Activated naive CD4-positive, alpha-beta T cell treated with anti-CD3 and anti-CD28 coated beads for 36 hours (primary cell): ENCODE measurements at regions of chr20 and their contacts with region 1.

Region 1: DNA sequence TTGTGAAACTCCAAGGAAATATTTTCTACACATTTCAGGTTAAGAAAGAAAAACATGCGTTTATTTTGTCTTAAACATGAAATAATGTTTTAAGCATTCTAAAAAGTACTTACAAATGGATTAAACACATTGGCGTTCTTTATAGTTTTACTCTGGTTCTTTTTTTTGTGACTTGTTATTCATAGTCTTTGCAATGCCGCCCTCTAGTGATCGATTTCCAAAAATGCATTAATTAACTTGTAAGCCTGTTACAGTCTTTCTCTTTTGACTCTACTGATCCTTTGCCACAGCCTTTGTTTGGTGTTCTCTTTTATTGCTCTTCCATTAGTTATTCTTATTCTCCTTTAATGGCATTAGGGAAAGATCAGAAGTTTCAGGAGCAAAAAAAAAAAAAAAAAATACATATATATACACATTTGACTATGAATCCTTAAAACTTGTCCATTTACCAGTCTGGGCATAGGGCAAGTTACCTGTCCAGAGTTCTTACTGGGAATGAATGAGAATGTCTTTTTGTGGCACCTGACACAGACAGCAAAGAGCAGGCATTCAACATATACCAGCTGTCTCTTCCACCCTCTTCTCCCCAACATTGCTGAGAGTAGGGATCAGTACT is 59.9 kb downstream of the MACROD2 start:
- DNase-seq: peak; percentile 23
- H3K4me3 Mint-ChIP-seq: no peak overlapping the region
- H3K27ac Mint-ChIP-seq: no peak overlapping the region
- H3K4me1 Mint-ChIP-seq: no peaks in the 10 kb centered on the region
- H3K27me3 Mint-ChIP-seq: peaks cover 2% of the 10 kb centered on the region

Region 2: GRCh38 chr20:12130781-12131180 is 1924.5 kb before region 1 on chr20:
- CTCF ChIA-PET with region 1: no interaction called
- intact Hi-C with region 1: no loop called
- DNase-seq: no peak
- H3K4me3 Mint-ChIP-seq: no peak overlapping the region
- H3K27ac Mint-ChIP-seq: no peak overlapping the region
- H3K4me1 Mint-ChIP-seq: no peaks in the 10 kb centered on the region
- H3K27me3 Mint-ChIP-seq: no peaks in the 10 kb centered on the region

Region 3: DNA sequence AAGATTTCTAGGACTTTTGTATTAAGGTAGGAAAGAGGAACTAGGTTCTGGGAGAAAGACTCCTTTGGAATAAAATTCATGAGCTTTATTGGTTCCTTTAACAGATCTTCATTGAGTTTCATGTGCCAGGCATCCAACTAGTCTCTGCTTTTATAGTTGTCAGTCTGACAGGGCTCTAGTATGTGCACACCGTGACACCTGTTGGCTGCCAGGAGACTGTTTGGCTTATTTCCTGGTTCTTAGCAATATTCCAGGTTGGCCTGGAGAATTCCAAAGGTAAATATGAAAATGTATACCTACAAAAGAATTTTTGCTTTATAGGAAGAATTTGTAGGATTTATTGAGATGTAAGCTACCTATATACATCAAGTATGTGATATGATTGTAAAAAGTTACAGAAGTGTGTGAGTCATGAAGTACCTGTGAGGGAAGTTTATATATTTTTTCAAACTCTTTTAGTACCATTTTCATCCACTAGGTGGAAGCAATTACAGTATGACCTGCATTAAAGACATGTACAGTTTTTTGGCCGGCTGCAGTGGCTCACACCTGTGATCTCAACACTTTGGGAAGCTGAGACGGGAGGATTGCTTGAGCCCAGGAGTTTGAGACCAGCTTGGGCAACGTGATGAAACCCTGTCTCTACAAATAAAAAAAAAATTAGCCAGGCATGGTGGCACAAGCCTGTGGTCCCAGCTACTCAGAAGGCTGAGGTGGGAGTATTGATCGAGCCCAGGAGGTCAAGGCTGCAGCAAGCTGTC is 235.2 kb before region 1 on chr20:
- CTCF ChIA-PET with region 1: interaction called, 20 read pairs
- intact Hi-C with region 1: loop called (anchors 1 kb)
- DNase-seq: peak; percentile 16
- H3K4me3 Mint-ChIP-seq: no peak overlapping the region
- H3K27ac Mint-ChIP-seq: no peak overlapping the region
- H3K4me1 Mint-ChIP-seq: peaks cover 24% of the 10 kb centered on the region
- H3K27me3 Mint-ChIP-seq: no peaks in the 10 kb centered on the region

Region 4: GRCh38 chr20:13898011-13898612 is 157.1 kb before region 1 on chr20:
- CTCF ChIA-PET with region 1: no interaction called
- intact Hi-C with region 1: loop called (anchors 1 kb)
- DNase-seq: no peak
- H3K4me3 Mint-ChIP-seq: no peak overlapping the region
- H3K27ac Mint-ChIP-seq: no peak overlapping the region
- H3K4me1 Mint-ChIP-seq: no peaks in the 10 kb centered on the region
- H3K27me3 Mint-ChIP-seq: no peaks in the 10 kb centered on the region